WTC11 (cell line): ENCODE measurements at regions of chr16 and their contacts with region 1.

Region 1: DNA sequence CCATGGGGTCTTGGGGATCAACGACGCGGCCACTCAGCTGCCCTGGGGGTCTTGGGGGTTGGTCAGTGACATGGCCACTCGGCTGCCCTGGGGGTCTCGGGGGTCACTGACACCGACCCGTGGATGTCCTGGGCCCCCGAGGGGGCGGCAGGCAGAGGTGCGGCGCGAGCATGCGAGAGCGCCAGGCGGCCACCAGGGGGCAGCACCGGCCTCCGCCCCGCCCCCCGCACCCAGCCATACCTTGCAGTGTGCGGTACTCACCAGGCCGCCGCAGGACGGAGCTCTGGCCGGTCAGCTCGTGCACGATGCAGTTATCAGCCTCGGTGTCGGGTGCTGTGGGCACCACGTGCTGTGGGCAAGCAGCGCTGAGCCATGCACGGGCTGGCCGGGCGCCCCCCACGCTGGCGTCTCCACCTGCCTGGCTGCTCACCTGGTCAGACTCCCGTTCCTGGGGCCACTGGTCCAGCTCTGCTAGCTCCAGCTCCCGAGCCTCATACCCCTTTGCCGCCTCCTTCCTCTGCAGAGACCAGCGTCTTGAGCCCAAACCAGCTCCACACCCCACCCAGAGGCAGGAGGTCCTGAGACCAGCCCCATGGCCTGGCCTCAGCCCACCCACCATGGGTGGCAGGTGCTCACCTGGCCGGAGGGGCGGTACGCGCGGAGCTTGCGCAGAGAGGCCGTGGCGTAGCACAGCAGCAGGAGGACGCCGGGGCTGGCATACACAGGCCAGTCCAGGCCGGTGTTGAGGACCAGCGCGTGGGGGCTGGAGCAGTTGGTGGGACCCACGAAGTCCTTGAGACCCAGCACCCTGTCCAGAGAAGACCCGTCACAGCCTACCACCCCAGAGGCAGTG is 31.2 kb downstream of the CTU2 start:
- DNase-seq: peak; percentile 81
- ATAC-seq: peak; percentile 86
- H3K4me3 Mint-ChIP-seq: no peak overlapping the region
- H3K27ac Mint-ChIP-seq: no peak overlapping the region
- H3K4me1 Mint-ChIP-seq: no peaks in the 10 kb centered on the region
- H3K27me3 Mint-ChIP-seq: no peaks in the 10 kb centered on the region
- CTCF ChIP-seq: peak; percentile 99

Region 2: DNA sequence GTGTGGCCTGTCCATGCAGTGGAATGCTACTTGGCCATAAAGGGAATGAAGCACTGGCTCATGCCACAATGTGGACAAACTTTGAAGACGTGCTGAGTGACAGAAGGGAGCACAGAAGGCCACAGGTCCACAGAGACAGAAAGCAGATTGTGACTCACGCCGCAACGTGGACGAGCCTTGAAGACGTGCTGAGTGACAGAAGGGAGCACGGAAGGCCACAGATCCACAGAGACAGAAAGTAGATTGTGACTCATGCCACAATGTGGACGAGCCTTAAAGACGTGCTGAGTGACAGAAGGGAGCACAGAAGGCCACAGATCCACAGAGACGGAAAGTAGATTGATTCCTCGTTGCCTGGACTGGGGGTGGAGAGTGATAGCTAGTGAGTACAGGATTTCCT is 148.1 kb before region 1 on chr16:
- CTCF ChIA-PET with region 1: no interaction called
- POLR2A ChIA-PET with region 1: no interaction called
- DNase-seq: no peak
- ATAC-seq: no peak
- H3K4me3 Mint-ChIP-seq: no peak overlapping the region
- H3K27ac Mint-ChIP-seq: no peak overlapping the region
- H3K4me1 Mint-ChIP-seq: no peaks in the 10 kb centered on the region
- H3K27me3 Mint-ChIP-seq: no peaks in the 10 kb centered on the region
- CTCF ChIP-seq: no peak

Region 3: DNA sequence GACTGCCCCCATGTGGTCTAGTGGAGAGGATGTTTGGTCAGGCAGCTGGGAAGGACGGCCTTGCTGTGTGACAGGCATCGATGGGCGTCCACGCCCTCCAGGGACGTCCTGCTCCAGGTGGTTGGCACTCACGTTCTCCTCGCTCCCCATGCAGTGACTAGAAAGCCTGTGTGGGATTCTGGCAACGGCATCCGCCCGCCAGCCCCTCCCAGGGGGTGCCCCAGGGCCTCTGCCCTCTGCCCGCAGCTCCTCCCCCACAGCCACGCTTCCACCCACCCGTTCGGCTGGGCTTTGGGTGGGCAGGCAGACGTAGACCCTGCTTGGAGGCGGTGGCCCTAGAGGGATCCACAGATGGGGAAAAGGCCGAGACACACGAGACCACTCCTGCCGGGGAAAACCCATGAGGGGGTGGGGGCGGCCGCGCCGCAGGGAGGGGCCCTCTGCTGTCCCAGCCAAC is 103.8 kb before region 1 on chr16:
- CTCF ChIA-PET with region 1: interaction called, 18 read pairs
- POLR2A ChIA-PET with region 1: no interaction called
- DNase-seq: peak; percentile 67
- ATAC-seq: peak; percentile 45
- H3K4me3 Mint-ChIP-seq: peak overlapping the region; percentile 69
- H3K27ac Mint-ChIP-seq: no peak overlapping the region
- H3K4me1 Mint-ChIP-seq: peaks cover 33% of the 10 kb centered on the region
- H3K27me3 Mint-ChIP-seq: peaks cover 10% of the 10 kb centered on the region
- CTCF ChIP-seq: no peak

Region 4: GRCh38 chr16:88686439-88687253 is 50.9 kb before region 1 on chr16 and contains the start of gene SNAI3:
- CTCF ChIA-PET with region 1: interaction called, 32 read pairs
- POLR2A ChIA-PET with region 1: no interaction called
- DNase-seq: peak; percentile 95
- ATAC-seq: peak; percentile 92
- H3K4me3 Mint-ChIP-seq: peak within 1 kb of the TSS; percentile 74
- H3K27ac Mint-ChIP-seq: no peak within 1 kb of the TSS
- H3K4me1 Mint-ChIP-seq: peaks cover 15% of the 10 kb centered on the region
- H3K27me3 Mint-ChIP-seq: peaks cover 28% of the 10 kb centered on the region
- CTCF ChIP-seq: no peak
- total RNA-seq, gene SNAI3: 8.0 to 9.4 TPM (median 9.1 TPM) in 3 replicates

Region 5: DNA sequence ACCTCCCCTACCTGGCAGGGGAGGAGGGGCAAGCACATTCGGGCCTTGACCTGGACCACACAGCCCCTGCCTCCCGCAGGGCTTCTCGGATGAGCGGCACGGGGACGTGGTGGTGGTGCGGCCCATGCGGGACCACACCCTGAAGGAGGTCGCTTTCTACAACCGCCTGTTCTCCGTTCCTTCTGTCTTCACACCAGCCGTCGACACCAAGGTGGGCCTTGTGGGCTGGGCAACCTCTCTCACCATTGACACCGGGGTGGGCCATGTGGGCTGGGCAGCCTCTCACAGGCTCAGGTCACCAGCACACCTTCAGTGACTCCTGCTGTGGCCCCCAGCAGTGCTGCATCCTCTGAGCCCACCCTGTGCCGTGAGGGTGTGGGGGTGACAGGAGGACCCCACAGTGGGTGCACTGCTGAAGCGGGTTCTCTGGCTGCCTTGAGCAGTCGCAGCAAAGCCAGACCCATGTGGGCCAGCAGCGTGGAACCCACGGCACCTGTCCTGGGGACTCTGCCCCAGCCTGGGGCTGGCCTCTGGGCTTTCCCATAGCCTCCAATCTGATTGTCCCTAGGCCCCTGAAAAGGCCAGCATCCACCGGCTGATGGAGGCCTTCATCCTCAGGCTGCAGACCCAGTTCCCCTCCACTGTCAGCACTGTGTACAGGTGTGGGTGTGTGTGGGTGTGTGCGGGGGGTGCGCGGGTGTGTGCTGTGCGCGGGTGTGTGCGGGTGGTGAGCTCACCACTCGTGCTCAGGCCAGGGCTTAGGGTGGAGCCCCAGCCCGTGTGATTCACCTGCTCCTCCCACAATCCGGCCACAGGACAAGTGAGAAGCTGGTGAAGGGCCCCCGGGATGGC is 23.7 kb before region 1 on chr16:
- CTCF ChIA-PET with region 1: interaction called, 41 read pairs
- POLR2A ChIA-PET with region 1: no interaction called
- DNase-seq: no peak
- ATAC-seq: no peak
- H3K4me3 Mint-ChIP-seq: no peak overlapping the region
- H3K27ac Mint-ChIP-seq: no peak overlapping the region; the same call in 1 of the 2 replicates
- H3K4me1 Mint-ChIP-seq: no peaks in the 10 kb centered on the region
- H3K27me3 Mint-ChIP-seq: no peaks in the 10 kb centered on the region
- CTCF ChIP-seq: no peak

Region 6: DNA sequence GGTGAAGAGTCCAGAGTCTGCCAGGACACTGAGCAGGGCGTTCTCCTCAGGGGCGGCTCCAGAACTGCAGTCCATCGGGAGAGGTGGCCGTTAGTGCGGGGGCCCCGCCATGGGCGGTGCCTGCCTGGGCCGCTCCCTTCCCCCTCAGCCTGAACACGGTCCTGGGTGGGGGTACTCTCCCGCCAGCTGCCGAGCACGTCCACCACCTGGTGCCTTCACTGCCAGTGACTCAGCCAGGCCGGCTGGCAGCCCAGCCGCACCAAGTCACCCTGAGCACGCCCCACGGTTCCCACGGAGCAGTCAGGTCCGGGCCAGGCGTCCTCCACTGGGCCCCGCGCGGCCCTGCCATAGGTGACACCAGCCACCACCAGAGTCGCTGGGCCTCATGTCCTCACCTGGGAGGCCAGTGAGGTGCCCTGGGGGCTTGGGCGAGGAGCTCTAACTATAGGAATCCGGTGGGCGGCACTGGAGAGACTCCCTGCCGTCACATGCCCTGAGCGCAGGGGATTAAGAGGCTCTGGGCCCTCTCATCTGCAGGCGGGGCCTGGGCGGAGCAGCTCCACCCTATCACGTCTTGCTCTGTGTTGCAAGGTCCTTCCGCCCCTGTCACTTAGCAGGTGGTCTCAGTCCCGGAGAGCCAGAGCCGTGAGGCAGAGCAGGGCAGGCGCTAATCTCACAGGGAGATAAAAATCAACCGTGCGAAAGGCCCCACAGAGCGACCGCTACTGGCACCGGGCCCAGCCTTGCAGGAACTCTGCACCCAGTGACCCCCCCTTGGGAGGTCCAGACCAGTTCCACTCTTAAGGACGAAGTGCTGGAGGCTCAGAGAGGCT is 33.2 kb after region 1 on chr16:
- CTCF ChIA-PET with region 1: interaction called, 108 read pairs
- POLR2A ChIA-PET with region 1: no interaction called
- DNase-seq: peak; percentile 65
- ATAC-seq: peak; percentile 64
- H3K4me3 Mint-ChIP-seq: no peak overlapping the region
- H3K27ac Mint-ChIP-seq: peak overlapping the region; percentile 57
- H3K4me1 Mint-ChIP-seq: peaks cover 29% of the 10 kb centered on the region
- H3K27me3 Mint-ChIP-seq: no peaks in the 10 kb centered on the region
- CTCF ChIP-seq: no peak

Region 7: DNA sequence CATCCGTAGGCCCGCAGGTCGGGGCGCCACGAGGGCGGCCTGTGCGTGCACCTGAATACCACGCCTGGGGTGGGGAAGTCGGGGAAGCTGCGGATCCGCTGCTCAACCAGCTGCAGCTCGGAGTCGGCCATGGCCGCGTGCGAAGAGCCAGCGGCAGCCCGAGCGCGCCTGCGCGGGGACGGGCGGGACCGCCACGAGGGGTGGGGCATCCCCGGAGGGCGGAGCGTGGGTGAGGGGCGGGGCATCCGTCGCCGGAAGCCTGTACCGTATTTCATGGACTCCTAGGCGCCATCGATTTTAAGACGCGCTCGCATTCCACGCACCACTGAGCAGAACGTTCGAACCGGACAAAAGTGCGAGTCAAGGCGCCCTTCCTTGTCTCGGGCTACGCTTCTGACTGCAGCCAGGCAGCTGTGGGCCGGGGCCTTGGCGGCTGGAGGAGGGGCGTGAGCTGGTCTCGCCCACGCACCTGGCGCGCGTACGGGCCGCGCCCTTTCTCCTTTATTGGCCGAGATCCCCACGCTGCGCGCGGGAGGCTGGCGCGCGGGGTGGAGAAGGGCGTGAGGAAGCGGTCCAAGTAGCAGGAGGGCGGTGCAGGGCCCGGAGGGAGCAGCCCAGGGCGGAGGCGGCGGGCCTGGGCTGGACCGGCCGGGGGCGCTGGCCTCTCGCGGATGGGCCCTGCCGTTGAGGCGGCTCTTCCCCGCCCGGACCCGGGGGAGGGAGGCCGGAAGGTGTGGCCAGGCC is 74.4 kb after region 1 on chr16 and contains the start of gene APRT:
- CTCF ChIA-PET with region 1: interaction called, 35 read pairs
- POLR2A ChIA-PET with region 1: interaction called, 5 read pairs
- DNase-seq: peak; percentile 95
- ATAC-seq: peak; percentile 61
- H3K4me3 Mint-ChIP-seq: peak within 1 kb of the TSS; percentile 87
- H3K27ac Mint-ChIP-seq: peak within 1 kb of the TSS; percentile 98
- H3K4me1 Mint-ChIP-seq: peaks cover 14% of the 10 kb centered on the region
- H3K27me3 Mint-ChIP-seq: no peaks in the 10 kb centered on the region
- CTCF ChIP-seq: no peak
- total RNA-seq, gene APRT: 272 to 288 TPM (median 282 TPM) in 3 replicates

Region 8: DNA sequence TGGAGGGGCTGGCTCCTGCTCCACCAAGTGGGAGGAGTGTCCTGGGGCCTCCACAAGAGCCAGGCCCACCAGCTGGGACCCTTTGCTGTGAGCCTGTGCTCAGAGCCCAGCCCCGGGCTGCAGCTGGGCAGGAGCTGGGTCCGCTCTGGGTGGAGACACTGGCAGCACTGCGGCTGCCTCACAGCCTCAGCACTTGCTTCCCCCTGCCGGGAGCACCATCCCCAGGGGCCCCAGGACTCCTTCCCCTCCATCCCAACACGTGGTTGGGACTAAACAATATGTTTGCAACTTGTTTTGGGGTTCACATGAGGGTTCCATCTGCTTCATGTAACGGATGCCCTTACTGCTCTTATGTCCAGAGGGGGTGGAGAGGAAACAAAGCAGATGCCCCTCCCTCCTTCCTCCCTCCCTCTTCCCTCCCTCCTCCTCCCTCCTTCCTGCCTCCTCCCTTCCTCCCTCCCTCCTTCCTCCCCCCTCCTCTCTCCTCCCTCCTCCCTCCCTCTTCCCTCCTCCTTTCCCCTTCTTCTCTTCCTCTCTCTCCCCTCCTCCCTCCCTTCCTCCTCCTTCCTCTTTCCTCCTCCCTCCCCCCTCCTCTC is 255.7 kb after region 1 on chr16:
- CTCF ChIA-PET with region 1: interaction called, 10 read pairs
- POLR2A ChIA-PET with region 1: no interaction called
- DNase-seq: no peak
- ATAC-seq: peak; percentile 66
- H3K4me3 Mint-ChIP-seq: no peak overlapping the region
- H3K27ac Mint-ChIP-seq: no peak overlapping the region
- H3K4me1 Mint-ChIP-seq: peaks cover 12% of the 10 kb centered on the region; the same call in 1 of the 2 replicates
- H3K27me3 Mint-ChIP-seq: peaks cover 9% of the 10 kb centered on the region
- CTCF ChIP-seq: no peak